RWPE1 (cell line): ENCODE measurements at regions of chr11 and their contacts with region 1.

Region 1: DNA sequence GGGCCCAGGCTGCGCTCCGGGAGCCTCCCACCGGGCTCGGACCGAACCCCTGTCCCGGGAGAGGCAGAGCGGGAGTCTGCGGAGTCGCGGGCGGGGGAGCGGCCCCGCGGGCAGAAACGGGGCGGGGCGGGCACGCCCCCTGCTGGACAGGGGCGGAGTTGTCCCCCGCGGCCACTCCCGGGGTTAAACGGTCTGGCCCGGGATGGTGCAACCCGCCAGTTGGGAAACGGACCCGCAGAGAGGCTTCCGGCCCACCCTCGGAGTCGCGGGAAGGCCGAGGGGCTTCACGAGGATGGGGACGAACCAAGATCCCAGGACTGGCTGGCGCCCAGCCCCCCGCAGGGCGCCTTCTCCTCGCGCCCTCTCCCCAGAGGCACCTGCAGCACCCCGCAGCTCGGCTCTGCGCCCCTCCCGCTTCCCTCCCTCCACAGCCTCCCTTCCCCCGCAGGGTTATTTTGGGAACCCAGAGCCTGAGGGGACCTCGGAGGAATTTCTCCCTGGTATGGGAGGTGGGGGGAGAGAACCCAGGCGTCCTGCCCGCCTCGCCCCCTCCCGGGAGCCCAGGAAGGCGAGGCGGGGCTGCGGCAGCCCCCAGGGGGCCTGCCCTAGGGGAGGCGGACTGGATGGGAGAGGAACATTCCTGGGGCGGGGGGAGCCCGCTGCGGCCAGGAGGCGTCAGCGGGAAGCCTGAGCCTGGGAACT is 902 bp downstream of the RASGRP2 start:
- DNase-seq: peak; percentile 83
- H3K27ac ChIP-seq: no peak overlapping the region
- CTCF ChIP-seq: peak; percentile 84

Region 2: GRCh38 chr11:64659417-64660144 is 83.5 kb before region 1 on chr11:
- CTCF ChIA-PET with region 1: interaction called, 15 read pairs
- POLR2A ChIA-PET with region 1: no interaction called
- DNase-seq: peak; percentile 76
- H3K27ac ChIP-seq: peak overlapping the region; percentile 77
- CTCF ChIP-seq: no peak